CD4-positive, alpha-beta memory T cell (primary cell): ENCODE measurements at regions of chr13 and their contacts with region 1.

Region 1: GRCh38 chr13:99374994-99375737 is 68.0 kb upstream of the GPR183 start:
- DNase-seq: peak; percentile 73 to 89 (median 82)
- H3K4me3 ChIP-seq: peak overlapping the region in 1 of 2 donors; percentile 15
- H3K4me3 Mint-ChIP-seq: peak overlapping the region; percentile 61 to 77 (median 68)
- H3K27ac ChIP-seq: peak overlapping the region; percentile 39
- H3K27ac Mint-ChIP-seq: peak overlapping the region; percentile 96 to 100 (median 98)
- H3K4me1 ChIP-seq: peaks cover 85% of the 10 kb centered on the region
- H3K4me1 Mint-ChIP-seq: peaks cover 58 to 95% (median 79%) of the 10 kb centered on the region in 4 donors
- H3K27me3 ChIP-seq: no peaks in the 10 kb centered on the region
- H3K27me3 Mint-ChIP-seq: no peaks in the 10 kb centered on the region

Region 2: GRCh38 chr13:99339736-99340397 is 35.3 kb before region 1 on chr13:
- CTCF ChIA-PET with region 1: interaction called, 6 read pairs
- POLR2A ChIA-PET with region 1: interaction called, 10 read pairs
- intact Hi-C with region 1: no loop called
- DNase-seq: peak; percentile 71 to 86 (median 76)
- H3K4me3 ChIP-seq: peak overlapping the region; percentile 4 to 37
- H3K4me3 Mint-ChIP-seq: peak overlapping the region; percentile 68 to 91 (median 85)
- H3K27ac ChIP-seq: peak overlapping the region; percentile 47
- H3K27ac Mint-ChIP-seq: peak overlapping the region; percentile 76 to 94 (median 91)
- H3K4me1 ChIP-seq: peaks cover 86% of the 10 kb centered on the region
- H3K4me1 Mint-ChIP-seq: peaks cover 71 to 97% (median 83%) of the 10 kb centered on the region in 4 donors
- H3K27me3 ChIP-seq: no peaks in the 10 kb centered on the region
- H3K27me3 Mint-ChIP-seq: no peaks in the 10 kb centered on the region